ENCODE measurements at regions of chr13 and their contacts with region 1.

Region 1: DNA sequence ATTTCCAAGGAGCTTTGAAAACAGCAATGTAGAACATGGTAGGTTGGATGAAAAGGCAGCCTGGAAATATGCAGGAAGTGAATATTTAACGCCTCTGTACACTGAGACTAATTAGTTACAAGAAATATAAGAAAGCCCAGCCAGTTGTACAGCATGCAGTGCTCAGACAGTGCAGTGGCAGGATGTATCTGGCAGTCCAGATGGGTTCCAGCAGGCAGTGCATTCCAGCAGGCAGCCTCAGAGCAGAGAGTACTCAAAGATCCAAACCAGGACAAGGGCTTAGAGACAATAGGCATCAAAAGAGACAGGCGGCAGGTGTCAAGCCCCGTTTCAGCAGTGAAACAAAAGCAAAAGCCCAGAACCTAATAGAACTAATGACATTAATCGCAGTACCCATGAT is 2776.3 kb downstream of the PCDH9 start:
- DNase-seq: no peak
- H3K4me3 ChIP-seq: no peak overlapping the region
- H3K27ac ChIP-seq: no peak overlapping the region
- H3K4me1 ChIP-seq: no peaks in the 10 kb centered on the region
- H3K27me3 ChIP-seq: no peaks in the 10 kb centered on the region
- CTCF ChIP-seq: no peak

Region 2: GRCh38 chr13:64925284-64925683 is 471.5 kb after region 1 on chr13:
- CTCF ChIA-PET with region 1: no interaction called
- POLR2A ChIA-PET with region 1: no interaction called
- intact Hi-C with region 1: no loop called
- DNase-seq: no peak
- H3K4me3 ChIP-seq: no peak overlapping the region
- H3K27ac ChIP-seq: no peak overlapping the region
- H3K4me1 ChIP-seq: peaks cover 13% of the 10 kb centered on the region; the same call in 1 of the 2 replicates
- H3K27me3 ChIP-seq: no peaks in the 10 kb centered on the region
- CTCF ChIP-seq: no peak

Region 3: DNA sequence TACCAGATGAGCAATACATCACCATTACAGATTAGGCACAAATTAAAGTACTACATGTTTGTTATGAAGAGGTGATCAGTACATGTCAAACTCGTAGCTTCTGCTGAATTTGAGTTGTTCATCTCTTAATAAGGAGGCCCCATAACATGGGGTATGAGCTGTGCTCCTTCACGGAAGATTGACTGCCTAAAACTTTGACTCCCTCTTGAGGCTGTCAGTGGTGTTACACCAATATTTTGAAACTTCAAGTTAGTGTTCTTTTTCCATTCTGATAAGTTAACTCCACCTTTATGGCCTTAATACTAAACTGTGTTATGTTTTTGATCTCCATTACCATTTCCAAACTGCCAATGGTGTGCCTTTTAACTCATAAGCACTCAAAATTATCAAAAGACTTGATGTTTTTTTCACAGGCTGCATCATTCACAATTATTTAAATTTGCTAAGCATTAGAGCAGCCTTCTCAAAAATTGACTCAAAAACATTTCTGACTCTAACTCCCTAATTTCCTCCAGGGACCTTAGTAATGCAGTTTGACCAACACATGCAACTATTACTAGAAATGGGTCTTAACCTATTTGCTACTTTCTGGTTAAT is 1184.8 kb after region 1 on chr13:
- CTCF ChIA-PET with region 1: no interaction called
- POLR2A ChIA-PET with region 1: no interaction called
- intact Hi-C with region 1: loop called (anchors 10 kb)
- DNase-seq: no peak
- H3K4me3 ChIP-seq: no peak overlapping the region
- H3K27ac ChIP-seq: no peak overlapping the region
- H3K4me1 ChIP-seq: no peaks in the 10 kb centered on the region
- H3K27me3 ChIP-seq: no peaks in the 10 kb centered on the region
- CTCF ChIP-seq: peak; percentile 77